ENCODE measurements at regions of chr1 and their contacts with region 1.

Region 1: DNA sequence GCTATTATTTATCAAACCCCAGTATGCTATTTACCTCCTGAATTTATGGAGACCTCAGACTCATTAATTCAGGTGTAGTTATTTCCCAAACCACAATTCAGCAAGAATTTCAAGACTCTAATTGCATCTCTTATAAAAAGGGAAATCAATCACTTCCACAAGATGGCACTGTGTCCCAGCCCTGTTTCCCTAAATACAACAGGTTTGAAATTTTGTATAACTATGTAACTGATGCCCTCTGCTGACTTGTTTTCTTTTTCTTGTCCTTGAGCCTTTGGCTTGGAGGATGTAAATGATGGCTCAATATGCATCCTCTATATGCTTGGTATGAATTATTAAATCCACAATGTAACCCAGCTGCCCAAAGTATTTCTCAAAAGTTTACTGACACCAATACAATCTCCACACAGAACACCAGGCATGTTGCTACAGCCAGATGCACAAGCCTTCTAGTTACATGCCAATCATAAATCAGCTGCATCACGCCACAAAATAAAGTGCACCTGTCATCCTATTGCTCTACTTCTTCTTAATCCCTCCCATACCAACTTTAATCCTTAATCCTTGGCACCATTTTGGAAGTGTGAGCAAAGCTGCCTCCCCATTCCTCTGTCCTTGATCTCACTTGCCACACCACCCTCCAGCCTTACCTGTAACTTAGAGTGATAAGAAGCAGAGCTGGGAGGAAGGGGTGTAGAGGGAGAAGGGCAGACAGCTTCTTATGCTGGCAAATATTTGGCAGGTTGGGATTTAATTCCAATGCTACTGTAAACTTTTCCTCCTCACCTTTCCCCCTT is 9.0 kb downstream of the C1orf105 start:
- DNase-seq: peak in 7 of 9 donors; percentile 47 to 73 (median 65)
- ATAC-seq: peak; percentile 92
- H3K4me3 ChIP-seq: no peak overlapping the region
- H3K4me3 Mint-ChIP-seq: peak overlapping the region in 5 of 10 donors; percentile 16 to 57 (median 49)
- H3K27ac ChIP-seq: no peak overlapping the region
- H3K27ac Mint-ChIP-seq: peak overlapping the region in 5 of 9 donors; percentile 76 to 92 (median 84)
- H3K4me1 ChIP-seq: peaks cover 13 to 64% of the 10 kb centered on the region in 2 donors
- H3K4me1 Mint-ChIP-seq: peaks cover 0 to 46% (median 32%) of the 10 kb centered on the region in 7 donors
- H3K27me3 ChIP-seq: no peaks in the 10 kb centered on the region
- H3K27me3 Mint-ChIP-seq: no peaks in the 10 kb centered on the region

Region 2: GRCh38 chr1:171781176-171781875 is 648.2 kb before region 1 on chr1 and contains the start of gene METTL13:
- CTCF ChIA-PET with region 1: no interaction called
- POLR2A ChIA-PET with region 1: no interaction called
- intact Hi-C with region 1: loop called in 1 of 2 experiments (anchors 5 kb)
- DNase-seq: peak; percentile 89 to 100 (median 99)
- ATAC-seq: peak; percentile 95
- H3K4me3 ChIP-seq: peak within 1 kb of the TSS; percentile 95
- H3K4me3 Mint-ChIP-seq: peak within 1 kb of the TSS; percentile 90 to 99 (median 94)
- H3K27ac ChIP-seq: peak within 1 kb of the TSS; percentile 74
- H3K27ac Mint-ChIP-seq: peak within 1 kb of the TSS; percentile 93 to 99 (median 96)
- H3K4me1 ChIP-seq: peaks cover 20 to 41% of the 10 kb centered on the region in 2 donors
- H3K4me1 Mint-ChIP-seq: peaks cover 28 to 65% (median 58%) of the 10 kb centered on the region in 7 donors
- H3K27me3 ChIP-seq: no peaks in the 10 kb centered on the region
- H3K27me3 Mint-ChIP-seq: no peaks in the 10 kb centered on the region
- total RNA-seq, gene METTL13: 15.6 to 50.7 (median 34.5) TPM

Region 3: DNA sequence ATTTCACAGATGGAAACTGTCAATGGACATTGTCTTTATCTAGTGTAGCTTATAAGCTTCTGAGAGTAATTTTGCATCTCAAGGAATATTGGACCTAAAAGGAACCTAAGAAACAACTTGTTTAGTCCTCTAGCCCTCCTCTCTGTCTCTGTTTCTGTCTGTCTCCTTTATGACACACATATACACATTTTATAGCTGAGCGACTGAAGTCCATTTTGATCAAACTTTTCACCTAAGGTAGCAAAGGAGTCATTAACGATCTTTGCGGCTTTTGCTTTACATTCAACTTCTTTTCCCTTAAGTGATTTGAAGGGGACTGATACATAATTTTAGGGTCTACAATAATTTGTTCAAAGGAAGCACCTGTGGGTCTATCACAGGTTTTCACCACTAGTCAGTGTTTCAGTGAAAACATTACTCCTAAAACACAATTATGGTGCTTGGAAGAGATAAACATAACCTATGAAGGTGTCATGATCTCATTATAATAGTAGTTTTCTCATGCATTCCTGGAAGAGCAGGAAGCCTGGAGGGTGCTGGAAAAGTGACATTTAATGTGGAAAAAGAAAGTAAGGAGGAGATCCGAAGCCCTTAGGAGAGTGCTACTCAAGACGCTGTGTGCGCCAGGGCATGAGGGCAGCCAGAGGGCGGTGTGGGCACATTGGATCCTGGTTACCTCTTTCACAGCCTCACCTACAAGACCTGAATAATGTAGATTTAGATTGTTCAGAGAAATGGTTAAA is 339.6 kb before region 1 on chr1:
- CTCF ChIA-PET with region 1: interaction called, 18 read pairs
- POLR2A ChIA-PET with region 1: interaction called, 3 read pairs
- intact Hi-C with region 1: loop called (anchors 1 kb)
- DNase-seq: peak; percentile 25 to 61 (median 46)
- ATAC-seq: peak; percentile 86
- H3K4me3 ChIP-seq: no peak overlapping the region
- H3K4me3 Mint-ChIP-seq: peak overlapping the region in 3 of 10 donors; percentile 9 to 35 (median 24)
- H3K27ac ChIP-seq: no peak overlapping the region
- H3K27ac Mint-ChIP-seq: peak overlapping the region in 4 of 9 donors; percentile 1 to 72 (median 50)
- H3K4me1 ChIP-seq: no peaks in the 10 kb centered on the region
- H3K4me1 Mint-ChIP-seq: peaks cover 0 to 7% (median 6%) of the 10 kb centered on the region in 7 donors
- H3K27me3 ChIP-seq: no peaks in the 10 kb centered on the region
- H3K27me3 Mint-ChIP-seq: peaks cover 0 to 7% (median 0%) of the 10 kb centered on the region in 5 donors

Region 4: DNA sequence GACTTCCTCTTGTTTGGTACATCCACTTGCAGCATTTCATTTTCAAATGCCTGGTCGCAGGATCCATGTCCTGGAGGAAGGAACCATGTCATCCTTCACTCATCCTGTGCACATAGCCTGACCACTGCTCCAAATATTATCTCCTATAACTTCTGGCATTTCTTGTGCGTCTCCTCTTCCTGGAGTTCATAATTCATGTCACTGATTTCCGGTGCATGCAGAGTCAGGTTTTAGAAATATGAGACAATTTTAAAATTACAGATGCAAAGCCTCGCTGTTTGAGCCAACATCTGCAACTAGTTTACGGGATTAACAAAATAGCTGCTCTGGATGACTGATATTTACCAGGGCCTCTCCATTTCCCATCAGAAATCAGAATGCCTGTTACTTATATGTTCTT is 320.2 kb before region 1 on chr1:
- CTCF ChIA-PET with region 1: no interaction called
- POLR2A ChIA-PET with region 1: no interaction called
- intact Hi-C with region 1: no loop called
- DNase-seq: no peak
- ATAC-seq: no peak
- H3K4me3 ChIP-seq: no peak overlapping the region
- H3K4me3 Mint-ChIP-seq: no peak overlapping the region
- H3K27ac ChIP-seq: no peak overlapping the region
- H3K27ac Mint-ChIP-seq: no peak overlapping the region
- H3K4me1 ChIP-seq: no peaks in the 10 kb centered on the region
- H3K4me1 Mint-ChIP-seq: peaks cover 0 to 5% (median 0%) of the 10 kb centered on the region in 7 donors
- H3K27me3 ChIP-seq: no peaks in the 10 kb centered on the region
- H3K27me3 Mint-ChIP-seq: peaks cover 0 to 20% (median 3%) of the 10 kb centered on the region in 5 donors

Region 5: DNA sequence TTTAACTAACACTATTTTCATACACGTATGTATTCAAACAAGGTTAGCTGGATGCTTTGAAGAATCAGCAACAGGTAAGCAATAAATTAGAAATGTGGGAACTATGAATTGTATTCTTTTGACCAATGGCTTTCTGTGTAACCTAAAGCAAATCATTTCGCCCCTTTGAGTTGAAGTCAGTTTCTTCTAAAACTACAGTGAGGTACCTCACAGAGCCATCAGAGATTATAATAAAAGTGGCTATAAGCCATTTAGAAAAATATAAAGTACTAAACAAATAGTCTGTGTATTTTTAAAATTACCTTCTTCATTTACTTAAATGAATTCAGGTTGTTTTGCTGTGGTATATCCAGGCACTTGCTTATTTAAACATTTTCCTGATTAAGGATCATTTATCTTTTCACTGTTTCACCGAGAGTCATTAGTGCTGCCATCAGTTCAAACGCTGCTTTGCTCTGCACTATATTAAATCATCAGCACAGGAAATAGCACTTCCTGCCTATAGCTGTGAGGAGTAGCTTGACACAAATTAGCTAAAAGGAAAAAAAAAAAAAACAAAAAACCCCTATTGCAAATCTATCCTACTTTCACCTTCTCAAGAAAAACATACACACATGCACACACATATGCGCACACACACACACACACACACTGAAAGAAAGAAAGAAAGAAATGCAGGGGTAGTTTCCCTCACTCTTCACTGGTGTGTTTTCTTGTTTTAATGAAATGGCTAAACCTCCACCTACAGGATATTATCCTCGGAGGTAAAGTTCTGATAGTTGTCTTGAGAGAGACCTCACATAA is 48.9 kb before region 1 on chr1:
- CTCF ChIA-PET with region 1: no interaction called
- POLR2A ChIA-PET with region 1: interaction called, 3 read pairs
- intact Hi-C with region 1: loop called (anchors 1 kb)
- DNase-seq: peak in 7 of 9 donors; percentile 49 to 82 (median 70)
- ATAC-seq: peak; percentile 96
- H3K4me3 ChIP-seq: peak overlapping the region; percentile 32
- H3K4me3 Mint-ChIP-seq: peak overlapping the region; percentile 53 to 82 (median 76)
- H3K27ac ChIP-seq: peak overlapping the region; percentile 76
- H3K27ac Mint-ChIP-seq: peak overlapping the region; percentile 86 to 94 (median 93)
- H3K4me1 ChIP-seq: peaks cover 10 to 18% of the 10 kb centered on the region in 2 donors
- H3K4me1 Mint-ChIP-seq: peaks cover 12 to 57% (median 49%) of the 10 kb centered on the region in 7 donors
- H3K27me3 ChIP-seq: no peaks in the 10 kb centered on the region
- H3K27me3 Mint-ChIP-seq: peaks cover 0 to 3% (median 0%) of the 10 kb centered on the region in 5 donors

Region 6: DNA sequence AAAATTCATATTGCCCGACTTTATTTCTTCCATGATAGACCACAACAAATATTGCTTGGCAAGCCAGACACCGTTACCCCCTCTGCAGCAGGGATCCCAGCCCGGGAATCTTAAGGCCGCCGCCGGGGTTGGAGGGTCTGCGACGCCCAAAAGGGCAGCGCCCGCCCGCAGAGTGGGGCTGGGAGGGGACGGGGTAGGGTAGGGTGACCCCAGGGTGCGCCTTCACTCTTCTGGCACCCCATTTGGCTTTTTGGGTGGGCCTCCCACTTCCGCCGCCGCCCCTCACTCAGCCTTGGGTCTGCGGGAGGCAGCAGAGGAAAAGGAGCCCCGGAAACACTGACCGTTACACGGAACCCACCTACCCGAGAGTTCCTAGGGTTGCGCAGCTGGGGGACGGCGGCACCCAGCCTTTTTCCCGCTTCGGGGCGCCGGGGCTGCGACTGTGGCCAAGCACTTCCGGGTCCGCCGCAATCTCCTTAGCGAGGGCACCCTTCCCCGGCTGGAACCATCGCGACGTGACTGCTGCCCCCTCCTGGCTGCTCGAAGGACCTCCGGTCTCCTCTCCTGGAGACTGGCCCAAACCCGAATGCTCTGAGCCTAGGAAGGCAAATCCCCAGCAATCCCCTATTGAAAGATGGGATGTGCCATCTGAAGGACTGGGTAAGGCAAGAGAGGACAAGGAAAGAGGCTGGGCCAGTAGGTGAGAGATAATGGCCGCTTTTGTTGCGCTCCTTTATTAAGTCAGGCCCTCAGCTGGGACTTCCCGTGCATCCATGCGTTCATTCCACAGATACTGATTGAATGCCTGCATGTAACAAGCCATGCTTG is 14.3 kb after region 1 on chr1 and contains the start of gene PIGC:
- CTCF ChIA-PET with region 1: interaction called, 120 read pairs
- POLR2A ChIA-PET with region 1: interaction called, 85 read pairs
- intact Hi-C with region 1: loop called (anchors 1 kb)
- DNase-seq: peak; percentile 78 to 89 (median 87)
- ATAC-seq: peak; percentile 100
- H3K4me3 ChIP-seq: peak within 1 kb of the TSS; percentile 72
- H3K4me3 Mint-ChIP-seq: peak within 1 kb of the TSS; percentile 87 to 98 (median 94)
- H3K27ac ChIP-seq: peak within 1 kb of the TSS; percentile 83
- H3K27ac Mint-ChIP-seq: peak within 1 kb of the TSS; percentile 91 to 97 (median 93)
- H3K4me1 ChIP-seq: peaks cover 15 to 25% of the 10 kb centered on the region in 2 donors
- H3K4me1 Mint-ChIP-seq: peaks cover 27 to 53% (median 47%) of the 10 kb centered on the region in 7 donors
- H3K27me3 ChIP-seq: no peaks in the 10 kb centered on the region
- H3K27me3 Mint-ChIP-seq: no peaks in the 10 kb centered on the region
- total RNA-seq, gene PIGC: 21.1 to 57.4 (median 25.1) TPM

Region 7: DNA sequence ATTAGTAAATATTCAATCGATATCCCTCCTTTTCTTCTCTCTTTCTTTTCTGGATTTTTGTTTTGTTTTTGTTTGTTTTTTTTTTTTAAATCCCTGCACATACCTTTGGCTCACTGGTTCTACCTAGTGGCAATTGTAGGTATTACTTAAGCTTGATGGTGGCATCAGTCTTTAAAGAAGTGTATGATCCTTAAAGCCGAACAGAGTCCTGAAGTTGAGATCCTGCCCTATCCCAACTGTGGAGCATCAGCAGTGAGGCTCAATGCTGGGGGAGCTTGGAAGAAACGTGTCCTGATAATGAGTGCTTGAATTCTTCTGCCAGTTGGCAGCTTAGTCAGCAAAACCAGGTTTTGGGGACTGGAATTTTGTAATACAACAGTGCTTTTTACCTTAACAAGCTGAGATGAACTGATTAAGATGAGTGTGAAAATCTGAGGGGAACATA is 290.2 kb after region 1 on chr1:
- CTCF ChIA-PET with region 1: interaction called, 14 read pairs
- POLR2A ChIA-PET with region 1: no interaction called
- intact Hi-C with region 1: loop called in 1 of 2 experiments (anchors 1 kb)
- DNase-seq: peak in 7 of 9 donors; percentile 29 to 61 (median 48)
- ATAC-seq: peak; percentile 87
- H3K4me3 ChIP-seq: no peak overlapping the region
- H3K4me3 Mint-ChIP-seq: no peak overlapping the region
- H3K27ac ChIP-seq: no peak overlapping the region
- H3K27ac Mint-ChIP-seq: peak overlapping the region in 4 of 9 donors; percentile 0 to 22 (median 9)
- H3K4me1 ChIP-seq: peaks cover 0 to 13% of the 10 kb centered on the region in 2 donors
- H3K4me1 Mint-ChIP-seq: peaks cover 21 to 50% (median 32%) of the 10 kb centered on the region in 7 donors
- H3K27me3 ChIP-seq: no peaks in the 10 kb centered on the region
- H3K27me3 Mint-ChIP-seq: peaks cover 0 to 8% (median 0%) of the 10 kb centered on the region in 5 donors

Region 8: DNA sequence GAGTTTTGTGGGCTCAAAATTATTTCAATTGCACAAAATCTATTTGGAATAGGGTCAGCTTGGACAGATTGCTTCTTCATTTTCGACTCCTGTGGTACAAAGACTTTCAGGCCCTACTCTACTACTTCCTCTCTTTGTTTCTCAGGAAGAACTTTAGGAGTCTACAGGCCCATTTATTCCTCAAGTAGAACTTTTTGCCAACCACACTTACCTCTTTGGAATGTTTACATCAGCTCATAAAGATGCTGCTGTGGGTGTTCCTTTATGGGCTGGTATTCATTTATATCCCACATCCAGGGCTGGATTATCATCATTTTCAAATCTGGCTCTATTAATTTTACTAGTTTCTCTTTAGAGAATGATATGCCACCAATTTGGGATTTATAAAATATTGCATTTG is 667.5 kb after region 1 on chr1:
- CTCF ChIA-PET with region 1: no interaction called
- POLR2A ChIA-PET with region 1: no interaction called
- intact Hi-C with region 1: no loop called
- DNase-seq: no peak
- ATAC-seq: no peak
- H3K4me3 ChIP-seq: no peak overlapping the region
- H3K4me3 Mint-ChIP-seq: no peak overlapping the region
- H3K27ac ChIP-seq: no peak overlapping the region
- H3K27ac Mint-ChIP-seq: no peak overlapping the region
- H3K4me1 ChIP-seq: no peaks in the 10 kb centered on the region
- H3K4me1 Mint-ChIP-seq: peaks cover 0 to 2% (median 0%) of the 10 kb centered on the region in 7 donors
- H3K27me3 ChIP-seq: no peaks in the 10 kb centered on the region
- H3K27me3 Mint-ChIP-seq: peaks cover 0 to 15% (median 0%) of the 10 kb centered on the region in 5 donors

Measured in naive thymus-derived CD4-positive, alpha-beta T cell (primary cell).